ENCODE measurements at regions of chr4 and their contacts with region 1.

Region 1: GRCh38 chr4:8274765-8275547 is 5.4 kb downstream of the HTRA3 start:
- DNase-seq: peak; percentile 87 to 89
- ATAC-seq: peak; percentile 67 to 84 (median 78)
- H3K4me3 ChIP-seq: no peak overlapping the region
- H3K27ac ChIP-seq: peak overlapping the region in 8 of 10 donors; percentile 42 to 86 (median 70)
- H3K4me1 ChIP-seq: peaks cover 53 to 96% (median 72%) of the 10 kb centered on the region in 9 donors
- H3K27me3 ChIP-seq: peaks cover 0 to 12% (median 0%) of the 10 kb centered on the region in 7 donors
- CTCF ChIP-seq: peak in 8 of 9 donors; percentile 12 to 67 (median 34)

Region 2: GRCh38 chr4:8221476-8221875 is 53.5 kb before region 1 on chr4:
- intact Hi-C with region 1: no loop called
- DNase-seq: no peak
- ATAC-seq: peak in 6 of 8 donors; percentile 32 to 79 (median 46)
- H3K4me3 ChIP-seq: no peak overlapping the region
- H3K27ac ChIP-seq: peak overlapping the region in 5 of 10 donors; percentile 19 to 82 (median 31)
- H3K4me1 ChIP-seq: peaks cover 0 to 40% (median 0%) of the 10 kb centered on the region in 9 donors
- H3K27me3 ChIP-seq: no peaks in the 10 kb centered on the region
- CTCF ChIP-seq: no peak

Region 3: DNA sequence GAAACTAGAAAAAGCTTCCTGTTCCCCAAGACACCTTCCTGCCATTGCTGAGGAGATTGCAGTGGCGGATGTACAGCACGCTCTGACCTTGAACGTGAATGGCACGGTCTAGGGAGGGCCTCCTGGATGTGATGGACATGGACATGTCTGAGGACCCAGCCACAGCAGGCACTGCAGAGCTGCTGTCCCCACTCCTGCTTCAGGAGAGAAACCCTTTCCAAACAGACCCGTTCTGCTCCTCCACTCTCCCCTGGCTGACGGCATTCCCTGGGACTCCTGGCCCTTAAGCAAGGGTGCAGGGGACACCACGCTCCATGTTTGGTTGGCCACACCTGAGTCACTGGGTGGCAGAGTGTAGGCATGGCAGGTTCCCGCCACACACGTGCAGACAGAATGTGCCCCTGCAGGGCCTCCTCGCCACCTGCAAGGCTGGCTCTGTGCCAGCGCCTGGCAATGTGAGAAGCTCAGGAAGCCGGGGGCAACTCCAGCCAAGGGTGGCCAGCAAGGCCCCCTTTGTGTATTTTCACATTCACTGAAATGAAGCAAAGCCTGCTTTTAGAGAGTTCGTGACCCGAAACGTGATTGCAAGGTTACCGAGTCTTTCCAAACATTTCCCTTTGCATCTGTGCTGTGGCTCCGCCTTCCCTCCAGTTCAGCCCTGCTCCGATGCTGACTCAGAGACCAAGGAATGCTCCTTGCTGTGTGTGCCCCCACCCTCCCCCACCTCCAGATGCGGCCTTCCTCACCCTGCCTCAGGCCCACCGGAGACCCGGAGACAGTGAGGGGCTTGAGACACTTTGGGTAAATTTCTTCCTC is 40.7 kb after region 1 on chr4:
- intact Hi-C with region 1: loop called in 1 of 10 experiments (anchors 5 kb)
- DNase-seq: no peak
- ATAC-seq: peak in 6 of 8 donors; percentile 39 to 70 (median 60)
- H3K4me3 ChIP-seq: no peak overlapping the region
- H3K27ac ChIP-seq: peak overlapping the region in 7 of 10 donors; percentile 28 to 64 (median 54)
- H3K4me1 ChIP-seq: peaks cover 5 to 45% (median 26%) of the 10 kb centered on the region in 9 donors
- H3K27me3 ChIP-seq: no peaks in the 10 kb centered on the region
- CTCF ChIP-seq: no peak

Region 4: GRCh38 chr4:8346891-8347605 is 72.1 kb after region 1 on chr4:
- intact Hi-C with region 1: loop called in 1 of 10 experiments (anchors 2 kb)
- DNase-seq: peak in 1 of 2 donors; percentile 45
- ATAC-seq: peak; percentile 41 to 67 (median 54)
- H3K4me3 ChIP-seq: no peak overlapping the region
- H3K27ac ChIP-seq: peak overlapping the region in 3 of 10 donors; percentile 4 to 65 (median 14)
- H3K4me1 ChIP-seq: peaks cover 0 to 39% (median 18%) of the 10 kb centered on the region in 9 donors
- H3K27me3 ChIP-seq: no peaks in the 10 kb centered on the region
- CTCF ChIP-seq: no peak

Region 5: GRCh38 chr4:8594097-8595038 is 319.4 kb after region 1 on chr4:
- intact Hi-C with region 1: no loop called
- DNase-seq: peak in 1 of 2 donors; percentile 64
- ATAC-seq: peak in 7 of 8 donors; percentile 51 to 80 (median 70)
- H3K4me3 ChIP-seq: no peak overlapping the region
- H3K27ac ChIP-seq: no peak overlapping the region
- H3K4me1 ChIP-seq: peaks cover 0 to 12% (median 0%) of the 10 kb centered on the region in 9 donors
- H3K27me3 ChIP-seq: peaks cover 7 to 67% (median 47%) of the 10 kb centered on the region in 7 donors
- CTCF ChIP-seq: peak; percentile 29 to 75 (median 67)

Measured in heart right ventricle (tissue), 16 donors.